SK-N-SH (cell line): ENCODE measurements at regions of chrX and their contacts with region 1.

Region 1: GRCh38 chrX:19334945-19335626 is 8.6 kb upstream of the PDHA1 start:
- DNase-seq: no peak
- H3K4me3 ChIP-seq: no peak overlapping the region; a peak in 1 of 4 replicates
- H3K27ac ChIP-seq: no peak overlapping the region
- H3K4me1 ChIP-seq: peaks cover 0 to 6% of the 10 kb centered on the region in 2 experiments; a peak in 2 of 4 replicates
- H3K27me3 ChIP-seq: peaks cover 16% of the 10 kb centered on the region; the same call in 1 of the 2 replicates
- CTCF ChIP-seq: peak; percentile 46
- EP300 ChIP-seq: no peak
- RAD21 ChIP-seq: peak; percentile 37

Region 2: GRCh38 chrX:18401848-18402213 is 933.3 kb before region 1 on chrX:
- CTCF ChIA-PET with region 1: interaction called, 10 read pairs
- POLR2A ChIA-PET with region 1: no interaction called
- DNase-seq: no peak
- H3K4me3 ChIP-seq: no peak overlapping the region
- H3K27ac ChIP-seq: no peak overlapping the region
- H3K4me1 ChIP-seq: no peaks in the 10 kb centered on the region
- H3K27me3 ChIP-seq: peaks cover 8% of the 10 kb centered on the region; the same call in 1 of the 2 replicates
- CTCF ChIP-seq: no peak
- EP300 ChIP-seq: no peak
- RAD21 ChIP-seq: no peak

Region 3: DNA sequence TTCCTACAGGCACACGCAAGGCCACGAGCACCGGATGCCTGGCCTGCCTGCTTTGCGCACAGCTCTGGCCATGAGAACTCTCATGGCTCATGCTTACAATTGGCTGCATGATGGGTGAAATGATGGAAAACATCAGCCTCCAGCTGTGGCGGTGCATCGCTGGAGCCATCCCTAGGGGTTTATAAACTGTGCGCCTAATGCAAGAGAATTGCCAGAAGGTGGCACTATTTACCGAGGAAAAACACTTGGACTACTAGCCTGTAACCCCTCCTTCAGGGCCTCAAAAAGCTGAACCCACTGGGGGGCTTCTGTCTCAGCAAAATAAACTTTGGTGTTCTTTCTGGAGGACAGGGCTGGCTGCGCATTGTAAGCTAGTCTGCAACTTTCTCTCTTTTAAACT is 403.1 kb before region 1 on chrX:
- CTCF ChIA-PET with region 1: interaction called, 30 read pairs
- POLR2A ChIA-PET with region 1: no interaction called
- DNase-seq: peak; percentile 64
- H3K4me3 ChIP-seq: no peak overlapping the region
- H3K27ac ChIP-seq: no peak overlapping the region
- H3K4me1 ChIP-seq: no peaks in the 10 kb centered on the region; a peak in 1 of 4 replicates
- H3K27me3 ChIP-seq: no peaks in the 10 kb centered on the region
- CTCF ChIP-seq: peak; percentile 62
- EP300 ChIP-seq: no peak
- RAD21 ChIP-seq: peak; percentile 77

Region 4: DNA sequence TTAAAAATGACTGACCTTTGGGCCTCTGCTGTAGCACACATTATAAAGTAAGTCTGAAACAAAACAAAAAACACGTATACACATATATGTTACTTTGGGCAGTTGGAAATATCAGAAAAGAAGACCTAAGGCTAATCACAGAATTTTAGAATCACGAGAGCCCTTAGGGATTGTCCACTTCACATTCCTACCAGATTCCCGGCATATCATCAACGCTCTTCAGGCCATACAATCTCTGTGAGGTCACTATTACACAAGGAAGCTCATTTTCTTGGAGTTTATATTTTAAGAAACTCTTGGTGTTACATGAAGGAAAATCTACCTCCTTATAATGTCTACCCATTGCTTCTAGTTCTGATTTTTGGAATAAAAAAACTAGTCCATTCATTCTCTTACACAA is 311.7 kb before region 1 on chrX:
- CTCF ChIA-PET with region 1: interaction called, 27 read pairs
- POLR2A ChIA-PET with region 1: no interaction called
- DNase-seq: no peak
- H3K4me3 ChIP-seq: no peak overlapping the region
- H3K27ac ChIP-seq: no peak overlapping the region
- H3K4me1 ChIP-seq: no peaks in the 10 kb centered on the region
- H3K27me3 ChIP-seq: no peaks in the 10 kb centered on the region
- CTCF ChIP-seq: no peak
- EP300 ChIP-seq: no peak
- RAD21 ChIP-seq: no peak

Region 5: DNA sequence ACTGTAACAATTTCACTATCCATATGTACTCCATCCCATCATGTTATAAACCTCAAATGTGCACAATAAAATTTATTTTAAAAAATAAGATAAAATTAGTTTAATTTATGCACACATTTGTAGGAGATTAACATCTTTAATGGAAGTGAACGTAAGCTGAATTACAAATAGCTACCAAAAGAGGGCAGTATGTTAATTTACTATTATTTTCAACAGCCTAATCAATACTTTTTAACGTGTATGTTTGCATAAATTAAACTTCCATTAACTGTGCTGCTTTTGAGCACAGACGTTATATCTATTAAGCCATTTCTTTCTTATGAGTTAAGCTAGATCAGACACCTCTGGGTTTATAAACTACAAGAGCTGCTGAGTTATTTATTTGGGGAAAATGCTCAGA is 294.7 kb before region 1 on chrX:
- CTCF ChIA-PET with region 1: interaction called, 27 read pairs
- POLR2A ChIA-PET with region 1: no interaction called
- DNase-seq: no peak
- H3K4me3 ChIP-seq: no peak overlapping the region
- H3K27ac ChIP-seq: no peak overlapping the region
- H3K4me1 ChIP-seq: no peaks in the 10 kb centered on the region
- H3K27me3 ChIP-seq: no peaks in the 10 kb centered on the region
- CTCF ChIP-seq: peak; percentile 66
- EP300 ChIP-seq: no peak
- RAD21 ChIP-seq: peak; percentile 46; the same call in 1 of the 2 replicates

Region 6: GRCh38 chrX:19354625-19355024 is 19.5 kb after region 1 on chrX:
- CTCF ChIA-PET with region 1: no interaction called
- POLR2A ChIA-PET with region 1: no interaction called
- DNase-seq: no peak
- H3K4me3 ChIP-seq: no peak overlapping the region
- H3K27ac ChIP-seq: no peak overlapping the region
- H3K4me1 ChIP-seq: no peaks in the 10 kb centered on the region
- H3K27me3 ChIP-seq: no peaks in the 10 kb centered on the region; the same call in 1 of the 2 replicates
- CTCF ChIP-seq: no peak
- EP300 ChIP-seq: no peak
- RAD21 ChIP-seq: no peak

Region 7: GRCh38 chrX:19479458-19479857 is 144.4 kb after region 1 on chrX:
- CTCF ChIA-PET with region 1: no interaction called
- POLR2A ChIA-PET with region 1: no interaction called
- DNase-seq: no peak
- H3K4me3 ChIP-seq: no peak overlapping the region
- H3K27ac ChIP-seq: no peak overlapping the region
- H3K4me1 ChIP-seq: no peaks in the 10 kb centered on the region
- H3K27me3 ChIP-seq: no peaks in the 10 kb centered on the region; the same call in none of the 2 replicates
- CTCF ChIP-seq: no peak
- EP300 ChIP-seq: no peak
- RAD21 ChIP-seq: no peak